Sciatic nerve (tissue), 2 donors: ENCODE measurements at regions of chr9 and their contacts with region 1.

Region 1: DNA sequence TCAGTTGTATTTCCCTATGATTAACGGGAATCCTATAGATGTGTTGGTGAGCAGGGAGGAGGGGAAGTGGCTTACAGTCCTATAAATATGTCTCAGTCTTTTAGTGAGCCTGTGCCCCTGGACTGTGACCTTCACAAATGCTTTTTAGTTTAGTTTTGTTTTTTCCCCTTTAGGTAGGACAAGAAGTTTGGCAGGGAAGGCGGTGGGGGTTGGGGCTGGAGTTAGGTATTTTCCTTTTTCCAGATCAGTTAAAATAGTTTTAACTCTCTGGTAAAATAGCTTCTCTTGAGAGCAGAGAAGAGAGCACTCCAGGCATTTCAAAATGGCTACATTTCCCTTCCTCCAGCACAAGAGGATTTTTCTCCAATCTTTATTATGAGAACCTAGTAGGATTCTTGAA is 272.1 kb downstream of the SPATA31D1 start:
- DNase-seq: no peak
- ATAC-seq: no peak

Region 2: DNA sequence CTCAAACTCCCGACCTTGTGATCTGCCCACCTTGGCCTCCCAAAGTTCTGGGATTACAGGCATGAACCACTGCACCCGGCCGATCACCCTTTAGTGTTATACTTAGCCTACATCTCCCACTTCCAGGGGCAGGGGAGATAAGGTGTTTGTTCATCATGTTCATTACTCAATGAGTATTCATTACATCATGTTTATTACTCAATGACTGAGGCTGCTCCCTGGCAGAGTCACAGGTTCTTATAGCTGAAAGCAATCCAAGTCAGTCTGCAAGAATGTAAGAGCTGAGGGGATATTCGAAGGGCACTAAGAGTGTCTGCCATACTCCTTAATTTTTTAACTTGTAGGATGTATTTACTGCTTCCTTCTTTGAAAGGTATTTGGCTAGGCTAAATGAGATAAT is 57.9 kb before region 1 on chr9:
- intact Hi-C with region 1: loop called (anchors 10 kb)
- DNase-seq: no peak
- ATAC-seq: no peak